Calu3 (cell line): ENCODE measurements at regions of chr7 and their contacts with region 1.

Region 1: GRCh38 chr7:39954694-39955093 is 4.6 kb downstream of the CDK13 start:
- DNase-seq: no peak
- H3K4me3 Mint-ChIP-seq: peak overlapping the region; percentile 87
- H3K27ac Mint-ChIP-seq: peak overlapping the region; percentile 25
- H3K4me1 Mint-ChIP-seq: peaks cover 43% of the 10 kb centered on the region
- H3K27me3 Mint-ChIP-seq: no peaks in the 10 kb centered on the region
- CTCF ChIP-seq: no peak

Region 2: GRCh38 chr7:39904077-39904486 is 50.6 kb before region 1 on chr7:
- CTCF ChIA-PET with region 1: no interaction called
- intact Hi-C with region 1: no loop called
- DNase-seq: no peak
- H3K4me3 Mint-ChIP-seq: no peak overlapping the region
- H3K27ac Mint-ChIP-seq: no peak overlapping the region
- H3K4me1 Mint-ChIP-seq: no peaks in the 10 kb centered on the region
- H3K27me3 Mint-ChIP-seq: peaks cover 14% of the 10 kb centered on the region
- CTCF ChIP-seq: no peak

Region 3: GRCh38 chr7:40008223-40008815 is 53.6 kb after region 1 on chr7:
- CTCF ChIA-PET with region 1: no interaction called
- intact Hi-C with region 1: loop called (anchors 2 kb)
- DNase-seq: peak; percentile 43
- H3K4me3 Mint-ChIP-seq: peak overlapping the region; percentile 35
- H3K27ac Mint-ChIP-seq: peak overlapping the region; percentile 88
- H3K4me1 Mint-ChIP-seq: peaks cover 68% of the 10 kb centered on the region
- H3K27me3 Mint-ChIP-seq: no peaks in the 10 kb centered on the region
- CTCF ChIP-seq: no peak

Region 4: DNA sequence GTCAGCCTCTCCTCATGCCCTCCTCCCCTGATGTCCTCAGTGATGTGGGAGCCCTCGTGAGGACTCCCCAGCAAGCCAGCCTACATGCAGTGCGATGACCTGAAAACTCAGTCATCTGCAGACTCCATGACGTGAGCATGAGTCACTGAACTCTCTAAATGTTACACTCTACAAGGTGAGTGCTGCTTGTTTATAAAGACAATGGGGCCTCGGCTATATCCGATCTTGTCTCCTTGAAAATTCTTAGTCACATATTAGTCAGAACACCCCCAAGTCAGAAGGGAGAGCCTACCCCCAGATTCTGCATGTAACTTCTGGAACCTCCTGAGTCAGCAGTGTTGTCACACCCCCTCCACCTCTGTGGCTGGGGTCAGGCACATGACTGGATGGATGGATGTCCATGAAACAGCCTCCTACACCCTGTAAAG is 1074.4 kb after region 1 on chr7:
- CTCF ChIA-PET with region 1: no interaction called
- intact Hi-C with region 1: no loop called
- DNase-seq: peak; percentile 67
- H3K4me3 Mint-ChIP-seq: peak overlapping the region; percentile 1
- H3K27ac Mint-ChIP-seq: peak overlapping the region; percentile 73
- H3K4me1 Mint-ChIP-seq: peaks cover 63% of the 10 kb centered on the region
- H3K27me3 Mint-ChIP-seq: no peaks in the 10 kb centered on the region
- CTCF ChIP-seq: no peak